ENCODE measurements at regions of chr11 and their contacts with region 1.

Region 1: GRCh38 chr11:35363854-35364780 is 55.2 kb downstream of the SLC1A2 start:
- DNase-seq: peak; percentile 94
- H3K4me3 ChIP-seq: peak overlapping the region in 2 of 4 donors; percentile 6 to 7
- H3K27ac ChIP-seq: peak overlapping the region; percentile 77 to 89 (median 85)
- H3K4me1 ChIP-seq: peaks cover 34 to 61% (median 48%) of the 10 kb centered on the region in 4 donors
- H3K27me3 ChIP-seq: no peaks in the 10 kb centered on the region
- CTCF ChIP-seq: no peak
- EP300 ChIP-seq: peak; percentile 67
- POLR2A ChIP-seq: no peak

Region 2: GRCh38 chr11:35250621-35251020 is 113.5 kb before region 1 on chr11:
- intact Hi-C with region 1: loop called (anchors 5 kb)
- DNase-seq: no peak
- H3K4me3 ChIP-seq: no peak overlapping the region
- H3K27ac ChIP-seq: peak overlapping the region in 3 of 4 donors; percentile 13 to 40 (median 24)
- H3K4me1 ChIP-seq: peaks cover 13 to 59% (median 55%) of the 10 kb centered on the region in 4 donors
- H3K27me3 ChIP-seq: no peaks in the 10 kb centered on the region
- CTCF ChIP-seq: no peak
- EP300 ChIP-seq: no peak
- POLR2A ChIP-seq: no peak